Calu3 (cell line): ENCODE measurements at regions of chr2 and their contacts with region 1.

Region 1: DNA sequence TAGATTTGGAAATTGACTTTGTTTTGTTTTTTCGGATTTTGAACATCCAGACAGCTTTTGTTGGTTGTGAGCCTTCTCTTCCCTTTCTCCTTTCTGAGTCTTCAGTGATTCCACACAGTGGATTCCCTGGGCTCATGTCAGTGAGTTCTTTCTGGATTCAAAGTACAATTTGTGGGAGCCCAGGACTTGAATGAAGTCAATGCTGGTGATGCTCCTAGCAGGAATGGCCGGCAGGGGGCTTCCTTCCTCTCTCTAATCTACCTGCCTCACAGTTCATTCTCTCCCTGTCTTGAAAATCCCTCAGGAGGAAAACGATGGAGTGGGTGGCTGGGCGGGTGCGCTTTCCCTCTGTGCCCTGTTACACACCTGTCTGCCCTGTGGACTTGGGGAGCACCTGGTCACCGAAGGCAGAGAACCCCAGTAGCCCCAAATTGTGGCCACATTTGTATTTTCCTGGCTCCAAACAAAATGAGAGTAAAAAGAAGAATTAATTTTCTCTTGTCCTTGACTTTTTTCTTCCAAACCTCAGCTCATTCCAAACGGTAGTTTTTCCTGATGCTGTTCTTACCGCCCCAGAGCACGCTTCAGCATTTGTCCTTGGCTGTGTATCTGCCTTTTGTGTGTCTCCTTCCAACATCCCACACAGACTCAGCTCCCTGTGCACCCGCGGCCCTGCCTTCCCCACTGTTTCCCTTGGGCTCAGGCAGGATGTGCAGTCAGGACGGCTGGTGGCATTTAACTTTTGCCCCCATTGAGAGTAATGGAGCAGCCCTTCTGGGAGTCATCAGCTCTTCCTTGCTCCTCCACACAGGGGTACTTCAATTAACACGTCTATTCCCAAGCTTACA is 86.6 kb downstream of the MARCO start:
- DNase-seq: peak; percentile 75
- H3K4me3 Mint-ChIP-seq: no peak overlapping the region
- H3K27ac Mint-ChIP-seq: no peak overlapping the region
- H3K4me1 Mint-ChIP-seq: peaks cover 7% of the 10 kb centered on the region
- H3K27me3 Mint-ChIP-seq: peaks cover 76% of the 10 kb centered on the region
- CTCF ChIP-seq: peak; percentile 74

Region 2: GRCh38 chr2:119174216-119175037 is 145.9 kb after region 1 on chr2:
- CTCF ChIA-PET with region 1: no interaction called
- intact Hi-C with region 1: loop called (anchors 1 kb)
- DNase-seq: peak; percentile 80
- H3K4me3 Mint-ChIP-seq: no peak overlapping the region
- H3K27ac Mint-ChIP-seq: no peak overlapping the region
- H3K4me1 Mint-ChIP-seq: peaks cover 4% of the 10 kb centered on the region
- H3K27me3 Mint-ChIP-seq: peaks cover 16% of the 10 kb centered on the region
- CTCF ChIP-seq: peak; percentile 76

Region 3: DNA sequence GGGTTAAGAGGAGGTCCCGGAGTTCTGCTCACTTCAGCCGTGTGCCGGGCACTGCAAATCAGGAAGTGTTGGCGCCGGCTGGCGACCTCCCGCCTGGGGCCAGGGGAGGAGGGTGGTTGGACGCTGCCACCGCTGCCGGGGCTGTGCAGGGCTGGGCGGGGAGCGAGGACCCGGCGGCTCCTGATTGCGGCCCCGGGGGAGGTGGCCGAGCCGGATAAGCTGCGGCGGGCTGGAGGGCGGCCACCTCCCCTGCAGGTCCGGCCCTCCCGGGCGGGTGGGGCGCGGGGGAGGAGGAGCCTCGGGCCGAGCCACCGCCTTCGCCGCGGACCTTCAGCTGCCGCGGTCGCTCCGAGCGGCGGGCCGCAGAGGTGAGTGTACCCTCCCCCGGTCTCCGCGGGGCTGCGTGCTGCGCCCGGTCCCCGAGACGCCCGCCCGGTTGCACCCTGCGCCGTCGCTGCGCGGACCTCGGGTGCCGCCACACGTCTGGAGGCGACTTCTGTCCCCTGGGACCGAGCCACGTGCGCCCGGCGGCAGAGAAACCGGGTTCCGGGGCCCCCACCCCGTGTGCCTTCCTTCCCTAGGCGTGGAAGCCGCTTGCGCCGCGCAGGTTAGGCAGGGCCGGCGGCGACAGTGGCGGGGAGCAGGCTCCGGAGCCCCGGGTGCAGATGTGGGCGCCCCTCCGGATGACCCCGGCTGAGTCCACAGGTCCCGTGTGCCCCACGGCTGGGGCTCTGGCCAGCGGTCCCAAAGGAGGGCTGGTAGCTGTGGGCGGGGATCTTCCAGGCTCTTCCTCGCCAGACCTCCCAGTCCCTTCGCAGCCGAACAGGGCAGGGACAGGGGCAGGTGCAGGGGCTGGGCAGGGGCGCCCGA is 195.2 kb after region 1 on chr2 and contains the start of gene STEAP3:
- CTCF ChIA-PET with region 1: no interaction called
- intact Hi-C with region 1: loop called (anchors 1 kb)
- DNase-seq: peak; percentile 86
- H3K4me3 Mint-ChIP-seq: peak within 1 kb of the TSS; percentile 69
- H3K27ac Mint-ChIP-seq: no peak within 1 kb of the TSS
- H3K4me1 Mint-ChIP-seq: no peaks in the 10 kb centered on the region
- H3K27me3 Mint-ChIP-seq: peaks cover 28% of the 10 kb centered on the region
- CTCF ChIP-seq: no peak
- total RNA-seq, gene STEAP3: 28.3 and 30.5 TPM in 2 replicates

Region 4: GRCh38 chr2:119264781-119265692 is 236.5 kb after region 1 on chr2:
- CTCF ChIA-PET with region 1: interaction called, 3 read pairs
- intact Hi-C with region 1: loop called (anchors 5 kb)
- DNase-seq: peak; percentile 67
- H3K4me3 Mint-ChIP-seq: no peak overlapping the region
- H3K27ac Mint-ChIP-seq: no peak overlapping the region
- H3K4me1 Mint-ChIP-seq: no peaks in the 10 kb centered on the region
- H3K27me3 Mint-ChIP-seq: no peaks in the 10 kb centered on the region
- CTCF ChIP-seq: peak; percentile 82

Region 5: GRCh38 chr2:119290859-119291587 is 262.5 kb after region 1 on chr2:
- CTCF ChIA-PET with region 1: no interaction called
- intact Hi-C with region 1: loop called (anchors 1 kb)
- DNase-seq: peak; percentile 80
- H3K4me3 Mint-ChIP-seq: no peak overlapping the region
- H3K27ac Mint-ChIP-seq: no peak overlapping the region
- H3K4me1 Mint-ChIP-seq: no peaks in the 10 kb centered on the region
- H3K27me3 Mint-ChIP-seq: no peaks in the 10 kb centered on the region
- CTCF ChIP-seq: peak; percentile 64